AG04450 (cell line): ENCODE measurements at regions of chr9 and their contacts with region 1.

Region 1: GRCh38 chr9:129776938-129777768 is 24.3 kb upstream of the PTGES start:
- DNase-seq: peak; percentile 98
- H3K4me3 ChIP-seq: peak overlapping the region; percentile 42
- H3K27ac ChIP-seq: peak overlapping the region; percentile 85
- H3K27me3 ChIP-seq: no peaks in the 10 kb centered on the region
- CTCF ChIP-seq: no peak

Region 2: GRCh38 chr9:129752915-129753729 is 24.0 kb before region 1 on chr9 and contains the start of gene PTGES:
- CTCF ChIA-PET with region 1: no interaction called
- POLR2A ChIA-PET with region 1: interaction called, 18 read pairs
- DNase-seq: peak; percentile 68
- H3K4me3 ChIP-seq: peak within 1 kb of the TSS; percentile 68
- H3K27ac ChIP-seq: peak within 1 kb of the TSS; percentile 21
- H3K27me3 ChIP-seq: peaks cover 2% of the 10 kb centered on the region
- CTCF ChIP-seq: no peak
- polyA plus RNA-seq, gene PTGES: 17.0 and 21.4 TPM in 2 replicates

Region 3: GRCh38 chr9:129761901-129762364 is 15.2 kb before region 1 on chr9:
- CTCF ChIA-PET with region 1: interaction called, 5 read pairs
- POLR2A ChIA-PET with region 1: interaction called, 22 read pairs
- DNase-seq: peak; percentile 55
- H3K4me3 ChIP-seq: peak overlapping the region; percentile 34
- H3K27ac ChIP-seq: peak overlapping the region; percentile 97
- H3K27me3 ChIP-seq: no peaks in the 10 kb centered on the region
- CTCF ChIP-seq: no peak